ENCODE measurements at regions of chr4 and their contacts with region 1.

Region 1: GRCh38 chr4:140326395-140326993 is 47.0 kb upstream of the SCOC start:
- DNase-seq: peak; percentile 68
- H3K4me3 ChIP-seq: no peak overlapping the region
- H3K27ac ChIP-seq: no peak overlapping the region
- H3K4me1 ChIP-seq: no peaks in the 10 kb centered on the region
- H3K27me3 ChIP-seq: peaks cover 4 to 6% of the 10 kb centered on the region in 2 experiments
- CTCF ChIP-seq: peak; percentile 69
- POLR2A ChIP-seq: no peak

Region 2: GRCh38 chr4:139734875-139735380 is 591.6 kb before region 1 on chr4:
- CTCF ChIA-PET with region 1: interaction called, 22 read pairs
- POLR2A ChIA-PET with region 1: no interaction called
- dilution Hi-C with region 1: no loop called
- intact Hi-C with region 1: loop called (anchors 1 kb)
- DNase-seq: peak; percentile 94
- H3K4me3 ChIP-seq: peak overlapping the region in 2 of 3 experiments; percentile 18 to 34
- H3K27ac ChIP-seq: peak overlapping the region; percentile 14
- H3K4me1 ChIP-seq: peaks cover 12% of the 10 kb centered on the region
- H3K27me3 ChIP-seq: no peaks in the 10 kb centered on the region
- CTCF ChIP-seq: peak; percentile 66 to 88
- POLR2A ChIP-seq: no peak

Region 3: DNA sequence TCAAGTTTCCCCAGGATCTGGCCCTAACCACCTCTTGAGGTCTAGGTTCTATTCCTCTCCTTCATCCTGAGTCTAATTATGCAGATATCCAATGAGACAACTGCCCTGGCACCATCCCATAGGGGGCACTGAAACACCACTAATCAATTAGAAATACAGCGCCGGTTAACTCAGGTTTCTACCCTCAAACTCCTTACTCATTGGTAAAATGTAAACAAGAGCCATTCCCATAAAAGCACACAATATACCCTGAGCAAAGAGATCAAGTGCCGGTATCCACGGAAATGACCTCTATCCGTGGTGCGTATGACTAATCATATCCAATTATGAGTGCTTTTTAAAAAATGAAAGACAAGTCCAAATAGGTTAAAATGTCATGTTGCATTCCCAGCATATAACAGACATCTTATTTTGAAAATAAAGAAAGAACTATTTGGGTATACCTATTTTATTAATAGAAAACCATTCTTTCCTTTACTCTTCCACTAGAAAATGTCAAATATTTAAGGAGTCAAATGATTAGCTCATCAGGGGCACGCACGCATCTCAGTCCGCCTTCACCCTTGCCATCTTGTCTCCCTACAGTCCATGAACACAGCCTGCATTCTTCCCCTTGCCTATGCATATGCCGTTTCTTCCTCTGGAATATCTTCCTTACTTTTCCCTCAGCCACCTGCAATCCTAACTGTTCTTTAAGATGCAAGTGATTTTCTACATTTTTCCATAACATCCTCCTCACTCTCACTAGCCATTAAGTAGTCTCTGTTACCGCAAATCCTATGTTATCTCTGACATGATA is 313.6 kb before region 1 on chr4:
- CTCF ChIA-PET with region 1: interaction called, 34 read pairs
- POLR2A ChIA-PET with region 1: no interaction called
- dilution Hi-C with region 1: no loop called
- intact Hi-C with region 1: loop called (anchors 1 kb)
- DNase-seq: peak; percentile 92
- H3K4me3 ChIP-seq: no peak overlapping the region
- H3K27ac ChIP-seq: peak overlapping the region; percentile 49
- H3K4me1 ChIP-seq: peaks cover 17% of the 10 kb centered on the region
- H3K27me3 ChIP-seq: no peaks in the 10 kb centered on the region
- CTCF ChIP-seq: peak; percentile 62 to 74
- POLR2A ChIP-seq: no peak

Region 4: GRCh38 chr4:140095694-140096482 is 230.6 kb before region 1 on chr4:
- CTCF ChIA-PET with region 1: interaction called, 5 read pairs
- POLR2A ChIA-PET with region 1: no interaction called
- dilution Hi-C with region 1: no loop called
- intact Hi-C with region 1: loop called (anchors 5 kb)
- DNase-seq: peak; percentile 95
- H3K4me3 ChIP-seq: peak overlapping the region in 1 of 3 experiments; percentile 57
- H3K27ac ChIP-seq: peak overlapping the region; percentile 100
- H3K4me1 ChIP-seq: peaks cover 97% of the 10 kb centered on the region
- H3K27me3 ChIP-seq: no peaks in the 10 kb centered on the region
- CTCF ChIP-seq: no peak
- POLR2A ChIP-seq: peak; percentile 53

Region 5: DNA sequence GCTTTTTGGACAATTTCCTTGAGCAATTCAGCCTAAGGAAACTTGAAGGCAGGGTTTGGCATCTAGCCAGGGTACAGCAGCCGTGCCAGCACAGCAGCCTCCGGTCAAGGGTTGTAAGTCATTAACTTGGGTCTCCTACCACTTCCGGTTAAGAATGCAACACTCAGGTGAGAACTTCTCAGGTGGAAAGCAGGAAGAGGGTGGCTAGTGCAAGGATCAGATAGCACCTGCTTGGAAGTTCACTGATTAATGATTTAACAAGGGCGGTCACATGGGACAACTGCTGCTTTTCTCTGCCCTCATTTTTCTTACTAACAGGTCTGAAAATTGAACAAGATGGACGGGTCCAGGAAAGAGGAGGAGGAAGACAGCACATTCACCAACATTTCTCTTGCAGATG is 16.8 kb after region 1 on chr4:
- CTCF ChIA-PET with region 1: interaction called, 22 read pairs
- POLR2A ChIA-PET with region 1: no interaction called
- dilution Hi-C with region 1: no loop called
- intact Hi-C with region 1: no loop called
- DNase-seq: peak; percentile 63
- H3K4me3 ChIP-seq: no peak overlapping the region
- H3K27ac ChIP-seq: no peak overlapping the region
- H3K4me1 ChIP-seq: peaks cover 9% of the 10 kb centered on the region
- H3K27me3 ChIP-seq: peaks cover 8 to 11% of the 10 kb centered on the region in 2 experiments
- CTCF ChIP-seq: no peak
- POLR2A ChIP-seq: no peak

Region 6: DNA sequence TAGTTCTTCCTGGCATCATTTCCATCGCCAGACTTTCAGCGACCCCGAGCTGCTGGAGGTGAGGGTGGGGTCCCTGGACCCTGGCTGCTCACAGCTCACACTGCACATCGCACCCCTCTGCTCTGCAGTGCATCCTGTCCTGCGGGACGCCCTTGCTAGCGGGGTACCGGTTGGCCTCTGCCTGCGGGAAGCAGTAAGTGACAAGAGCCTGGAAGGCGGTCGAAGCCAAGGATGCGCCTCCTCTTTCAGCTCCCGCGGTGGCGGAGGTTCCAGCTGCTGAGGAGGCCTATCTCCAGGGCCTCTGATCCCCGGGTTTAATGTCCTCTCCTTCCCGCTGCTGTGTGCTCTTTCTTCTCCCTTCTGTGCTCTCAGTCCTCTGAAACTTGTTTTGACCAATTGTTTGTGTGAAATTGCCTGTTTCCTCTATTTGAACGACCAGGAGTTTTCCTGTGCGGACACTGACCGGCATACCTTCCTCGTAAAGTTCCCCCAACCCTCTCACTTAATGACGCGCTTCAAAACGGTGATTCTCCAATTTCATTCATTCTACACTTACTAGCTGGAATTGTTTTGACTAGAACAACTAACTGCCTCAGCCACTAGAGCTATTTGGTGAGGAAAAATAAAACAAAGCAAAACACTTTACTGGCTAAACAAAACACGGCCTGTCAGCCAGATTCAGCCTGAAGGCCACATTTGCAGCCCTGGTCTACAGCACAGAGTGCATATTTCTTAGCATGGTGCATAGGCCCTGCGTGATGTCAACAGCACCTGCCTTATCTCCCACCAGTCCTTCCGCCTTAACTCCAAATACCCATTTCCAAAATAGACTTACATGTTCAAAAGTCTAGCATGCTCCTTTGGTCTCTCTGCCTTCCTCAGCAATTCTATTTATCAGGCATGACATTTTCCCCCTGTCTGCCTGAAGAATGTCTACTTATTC is 143.6 kb after region 1 on chr4:
- CTCF ChIA-PET with region 1: no interaction called
- POLR2A ChIA-PET with region 1: no interaction called
- dilution Hi-C with region 1: no loop called
- intact Hi-C with region 1: no loop called
- DNase-seq: no peak
- H3K4me3 ChIP-seq: no peak overlapping the region
- H3K27ac ChIP-seq: no peak overlapping the region
- H3K4me1 ChIP-seq: no peaks in the 10 kb centered on the region
- H3K27me3 ChIP-seq: peaks cover 17 to 49% of the 10 kb centered on the region in 2 experiments
- CTCF ChIP-seq: no peak
- POLR2A ChIP-seq: no peak

Region 7: GRCh38 chr4:140609548-140610425 is 283.3 kb after region 1 on chr4:
- CTCF ChIA-PET with region 1: interaction called, 23 read pairs
- POLR2A ChIA-PET with region 1: no interaction called
- dilution Hi-C with region 1: no loop called
- intact Hi-C with region 1: loop called (anchors 1 kb)
- DNase-seq: peak; percentile 75
- H3K4me3 ChIP-seq: no peak overlapping the region
- H3K27ac ChIP-seq: no peak overlapping the region
- H3K4me1 ChIP-seq: peaks cover 3% of the 10 kb centered on the region
- H3K27me3 ChIP-seq: peaks cover 0 to 11% of the 10 kb centered on the region in 2 experiments
- CTCF ChIP-seq: peak; percentile 20 to 36
- POLR2A ChIP-seq: no peak

Region 8: DNA sequence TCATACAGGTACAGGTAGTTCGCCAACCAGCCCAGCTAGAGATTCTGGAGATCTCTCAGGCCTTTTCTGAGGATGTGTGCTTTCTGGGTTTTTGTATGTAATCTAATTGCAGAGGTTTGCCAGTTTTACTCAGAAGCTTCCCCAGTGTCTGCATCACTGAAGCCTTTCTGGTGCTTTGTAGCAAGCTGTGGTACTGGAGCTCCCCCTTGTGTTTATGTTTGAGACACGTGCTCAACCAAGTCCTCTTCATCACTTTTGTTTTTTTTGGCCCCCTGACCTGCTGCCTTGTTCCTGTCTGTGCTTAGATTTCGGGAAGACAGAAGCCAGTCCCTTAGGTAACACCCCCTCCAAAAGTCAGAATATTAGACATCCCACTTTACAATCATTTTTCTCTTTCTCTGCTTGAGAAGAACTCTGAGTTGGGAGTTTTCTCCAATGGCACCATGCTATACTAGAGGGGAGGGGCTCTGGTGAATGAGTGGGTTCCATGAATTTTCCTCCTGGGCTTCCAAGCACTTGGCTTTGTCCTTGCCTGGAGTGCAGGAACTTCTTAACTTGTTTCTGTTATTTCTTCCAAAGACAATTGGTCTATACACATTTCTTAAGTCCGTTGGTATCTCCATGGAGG is 558.1 kb after region 1 on chr4:
- CTCF ChIA-PET with region 1: interaction called, 15 read pairs
- POLR2A ChIA-PET with region 1: no interaction called
- dilution Hi-C with region 1: no loop called
- intact Hi-C with region 1: no loop called
- DNase-seq: peak; percentile 68
- H3K4me3 ChIP-seq: no peak overlapping the region
- H3K27ac ChIP-seq: no peak overlapping the region
- H3K4me1 ChIP-seq: no peaks in the 10 kb centered on the region
- H3K27me3 ChIP-seq: peaks cover 8 to 10% of the 10 kb centered on the region in 2 experiments
- CTCF ChIP-seq: peak; percentile 65 to 74
- POLR2A ChIP-seq: no peak